PC-9 (cell line): ENCODE measurements at regions of chr3 and their contacts with region 1.

Region 1: GRCh38 chr3:58491506-58492402 is at the start of gene KCTD6:
- DNase-seq: peak; percentile 82 to 96
- H3K4me3 ChIP-seq: peak within 1 kb of the TSS; percentile 96
- H3K27ac ChIP-seq: peak within 1 kb of the TSS; percentile 1; the same call in 1 of the 2 replicates
- H3K4me1 ChIP-seq: peaks cover 58% of the 10 kb centered on the region
- H3K27me3 ChIP-seq: no peaks in the 10 kb centered on the region
- CTCF ChIP-seq: peak; percentile 56
- total RNA-seq, gene KCTD6: 7.8 and 10.3 TPM in 2 replicates

Region 2: DNA sequence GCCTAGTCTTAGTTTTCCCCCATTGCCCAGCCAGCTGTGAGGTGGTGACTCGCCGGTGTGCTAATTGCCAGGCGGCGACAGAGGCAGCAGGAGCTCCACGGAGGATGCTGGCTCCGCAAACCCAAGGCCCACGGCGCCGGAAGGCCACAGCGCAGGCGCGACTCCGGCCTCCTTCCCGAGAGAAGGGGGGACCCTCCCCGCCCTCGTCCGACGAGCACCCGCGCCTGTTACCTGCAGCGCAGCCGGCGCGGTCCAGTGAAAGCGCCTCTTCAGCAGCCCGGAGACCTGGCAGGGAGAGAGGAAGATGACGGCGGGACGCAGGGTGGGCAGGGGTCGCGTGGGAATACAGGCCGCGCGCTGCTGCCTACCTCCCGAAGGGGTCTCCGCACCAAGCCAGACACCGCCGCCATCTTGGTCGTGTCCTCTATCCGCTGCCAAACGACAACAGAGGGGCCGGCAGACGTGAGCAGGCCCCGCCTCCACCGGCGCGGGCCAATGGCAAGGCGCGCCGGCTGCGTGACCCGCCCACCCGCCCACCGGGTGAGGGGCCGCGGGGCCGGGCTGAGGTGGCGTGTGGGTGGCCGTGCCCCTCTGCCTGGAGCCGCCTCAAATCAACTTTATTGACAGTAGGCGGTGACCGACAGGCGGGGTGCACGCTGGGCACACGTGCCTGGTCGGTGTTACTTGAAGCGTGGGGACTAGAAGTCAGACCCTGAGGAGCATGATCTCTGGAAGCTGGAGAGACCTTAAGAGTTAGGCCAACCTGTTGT is 58.2 kb before region 1 on chr3 and contains the start of gene PDHB:
- CTCF ChIA-PET with region 1: no interaction called
- POLR2A ChIA-PET with region 1: no interaction called
- intact Hi-C with region 1: loop called (anchors 1 kb)
- DNase-seq: peak; percentile 67 to 87
- H3K4me3 ChIP-seq: peak within 1 kb of the TSS; percentile 84
- H3K27ac ChIP-seq: no peak within 1 kb of the TSS
- H3K4me1 ChIP-seq: peaks cover 13% of the 10 kb centered on the region
- H3K27me3 ChIP-seq: no peaks in the 10 kb centered on the region
- CTCF ChIP-seq: no peak; the same call in 1 of the 2 replicates
- total RNA-seq, gene PDHB: 69.8 and 70.7 TPM in 2 replicates

Region 3: DNA sequence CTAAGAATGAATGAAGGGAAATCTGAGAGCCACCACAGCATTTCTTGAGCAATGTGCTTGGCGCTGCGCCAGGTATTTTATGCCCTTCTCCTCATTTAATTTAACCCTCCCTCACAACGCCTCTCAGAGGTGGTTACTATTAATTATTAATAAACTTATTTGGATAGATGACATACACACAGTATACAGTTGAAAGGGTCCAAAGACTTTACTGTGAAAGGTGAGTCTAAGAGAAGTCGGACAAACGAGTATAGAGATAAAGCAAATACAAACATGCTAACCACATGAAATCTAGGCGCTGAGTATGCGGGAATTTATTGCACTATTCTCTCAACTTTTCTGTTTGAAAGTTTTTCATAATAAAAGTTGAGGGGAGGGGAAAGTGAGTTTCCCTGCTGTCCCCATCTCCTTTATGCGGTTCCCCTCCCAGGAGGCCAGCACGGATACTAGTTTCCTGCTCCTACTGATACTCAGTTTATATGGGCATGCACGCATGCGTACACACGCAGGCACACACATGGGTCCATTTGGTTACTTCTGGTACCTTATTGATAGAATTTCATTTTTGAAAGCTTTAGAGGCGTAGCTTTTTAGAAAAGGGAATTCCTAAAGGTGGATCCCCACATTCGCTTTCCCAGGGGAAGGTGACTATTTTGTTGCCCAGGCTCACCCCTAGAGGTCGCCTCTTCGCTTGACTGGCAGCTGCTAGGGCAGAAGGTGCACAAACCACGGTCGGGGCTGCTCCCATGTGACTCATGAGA is 28.4 kb before region 1 on chr3:
- CTCF ChIA-PET with region 1: interaction called, 13 read pairs
- POLR2A ChIA-PET with region 1: interaction called, 3 read pairs
- intact Hi-C with region 1: loop called (anchors 1 kb)
- DNase-seq: peak; percentile 71 to 77
- H3K4me3 ChIP-seq: no peak overlapping the region
- H3K27ac ChIP-seq: no peak overlapping the region
- H3K4me1 ChIP-seq: peaks cover 29% of the 10 kb centered on the region
- H3K27me3 ChIP-seq: no peaks in the 10 kb centered on the region
- CTCF ChIP-seq: peak; percentile 85

Region 4: GRCh38 chr3:58585005-58585786 is 93.4 kb after region 1 on chr3:
- CTCF ChIA-PET with region 1: no interaction called
- POLR2A ChIA-PET with region 1: no interaction called
- intact Hi-C with region 1: no loop called
- DNase-seq: peak in 1 of 2 experiments; percentile 61
- H3K4me3 ChIP-seq: peak overlapping the region; percentile 73
- H3K27ac ChIP-seq: no peak overlapping the region
- H3K4me1 ChIP-seq: peaks cover 10% of the 10 kb centered on the region; the same call in 1 of the 2 replicates
- H3K27me3 ChIP-seq: peaks cover 23% of the 10 kb centered on the region
- CTCF ChIP-seq: peak; percentile 67